B cell (primary cell): ENCODE measurements at regions of chr1 and their contacts with region 1.

Region 1: DNA sequence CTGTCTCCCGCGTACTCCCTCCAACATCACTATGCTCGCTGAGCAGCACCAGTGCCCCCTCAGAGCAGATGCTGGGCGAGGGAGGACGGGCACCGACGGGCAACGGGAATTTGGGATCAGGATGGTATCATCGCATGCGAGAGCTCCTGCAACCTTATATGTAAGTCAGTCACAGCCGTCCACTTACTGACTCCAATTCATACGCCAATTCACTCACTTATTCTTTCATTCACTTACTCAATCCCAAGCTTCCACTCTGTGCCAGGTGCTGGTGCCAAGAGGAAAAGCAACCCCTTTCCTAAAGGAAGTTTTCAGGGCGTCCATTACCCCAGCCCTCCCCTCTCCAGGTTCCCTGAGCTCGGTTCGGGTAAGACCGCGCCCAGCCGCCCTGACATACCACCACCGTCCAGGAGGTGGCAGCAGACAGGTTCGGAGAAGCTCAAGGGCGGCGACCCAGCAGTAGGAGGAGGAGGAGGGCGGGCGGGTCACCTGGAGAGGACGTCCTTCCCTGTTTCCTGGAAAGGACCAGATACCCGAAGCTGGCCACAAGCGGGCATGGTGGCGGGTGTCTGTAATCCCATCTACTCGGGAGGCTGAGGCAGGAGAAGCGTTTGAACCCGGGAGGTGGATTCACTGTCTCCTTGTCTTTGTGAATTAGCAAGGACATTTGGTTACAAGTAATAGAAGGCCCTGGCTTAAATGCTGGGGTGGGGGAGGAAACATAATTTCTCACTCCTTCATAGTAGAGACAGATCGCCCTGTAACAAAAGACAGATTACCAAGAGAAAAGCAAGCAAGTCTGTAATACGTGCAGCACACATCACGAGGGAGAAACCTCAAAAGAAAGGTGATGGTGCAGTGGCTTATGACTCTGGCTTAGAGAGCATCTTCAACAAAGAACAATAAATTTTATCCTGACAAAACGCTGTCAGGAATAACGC is 7.6 kb upstream of the IL22RA1 start:
- DNase-seq: peak; percentile 90
- ATAC-seq: peak; percentile 98
- H3K4me3 ChIP-seq: peak overlapping the region in 4 of 5 experiments; percentile 32 to 50 (median 48)
- H3K4me3 Mint-ChIP-seq: peak overlapping the region; percentile 82
- H3K27ac ChIP-seq: no peak overlapping the region
- H3K27ac Mint-ChIP-seq: peak overlapping the region; percentile 21
- H3K4me1 ChIP-seq: peaks cover 13 to 19% of the 10 kb centered on the region in 2 donors
- H3K4me1 Mint-ChIP-seq: peaks cover 27% of the 10 kb centered on the region
- H3K27me3 ChIP-seq: peaks cover 0 to 7% (median 2%) of the 10 kb centered on the region in 4 experiments
- H3K27me3 Mint-ChIP-seq: peaks cover 3% of the 10 kb centered on the region
- CTCF ChIP-seq: peak; percentile 88

Region 2: DNA sequence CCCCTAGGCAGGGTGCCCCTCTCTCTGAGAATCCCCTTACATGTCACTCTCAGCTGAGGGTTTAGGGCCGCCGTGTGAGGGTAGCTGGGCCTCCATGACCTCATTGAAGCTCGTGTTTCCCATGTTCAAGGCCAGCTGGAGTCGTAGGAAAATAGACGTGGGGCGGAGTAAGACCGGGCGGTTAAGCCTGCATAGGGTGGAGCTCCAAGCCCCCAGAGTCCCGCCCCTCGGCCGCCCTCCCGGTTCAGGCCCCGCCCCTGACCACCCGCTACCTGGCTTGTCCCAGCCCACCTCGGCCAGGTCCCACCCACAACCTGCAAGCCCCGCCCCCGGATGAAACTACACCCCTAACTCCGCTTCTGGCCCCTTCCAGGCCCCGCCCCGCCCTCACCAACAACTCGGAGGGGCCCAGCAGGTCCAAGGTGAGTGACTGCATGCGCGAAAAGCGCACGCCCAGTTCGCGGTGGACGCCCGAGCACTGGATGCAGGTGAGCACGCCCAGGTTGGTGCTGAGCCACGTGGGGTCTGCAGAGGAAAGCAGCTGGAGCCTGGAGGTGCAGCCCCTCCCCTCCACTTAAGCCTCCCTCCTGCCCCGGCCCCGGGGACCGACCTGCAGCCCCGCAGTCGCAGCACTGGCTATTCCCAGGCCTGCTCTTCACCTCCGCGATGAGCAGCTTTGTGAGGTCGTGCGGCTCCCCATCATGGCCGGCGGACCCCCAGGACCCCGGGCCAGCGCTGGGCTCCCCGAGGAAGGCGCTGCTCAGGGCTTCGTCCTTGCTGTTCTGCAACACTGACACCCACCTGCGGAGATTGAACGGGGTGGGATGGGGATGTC is 713.8 kb before region 1 on chr1:
- CTCF ChIA-PET with region 1: no interaction called
- POLR2A ChIA-PET with region 1: no interaction called
- intact Hi-C with region 1: no loop called
- DNase-seq: peak; percentile 36
- ATAC-seq: peak; percentile 49
- H3K4me3 ChIP-seq: no peak overlapping the region
- H3K4me3 Mint-ChIP-seq: no peak overlapping the region
- H3K27ac ChIP-seq: no peak overlapping the region
- H3K27ac Mint-ChIP-seq: no peak overlapping the region
- H3K4me1 ChIP-seq: no peaks in the 10 kb centered on the region
- H3K4me1 Mint-ChIP-seq: no peaks in the 10 kb centered on the region
- H3K27me3 ChIP-seq: peaks cover 0 to 2% (median 0%) of the 10 kb centered on the region in 4 experiments
- H3K27me3 Mint-ChIP-seq: peaks cover 9% of the 10 kb centered on the region
- CTCF ChIP-seq: no peak

Region 3: GRCh38 chr1:23825076-23825761 is 325.3 kb before region 1 on chr1 and contains the start of gene HMGCL:
- CTCF ChIA-PET with region 1: no interaction called
- POLR2A ChIA-PET with region 1: no interaction called
- intact Hi-C with region 1: no loop called
- DNase-seq: peak; percentile 92
- ATAC-seq: peak; percentile 98
- H3K4me3 ChIP-seq: peak within 1 kb of the TSS; percentile 76 to 95 (median 93)
- H3K4me3 Mint-ChIP-seq: peak within 1 kb of the TSS; percentile 96
- H3K27ac ChIP-seq: peak within 1 kb of the TSS; percentile 81 to 97
- H3K27ac Mint-ChIP-seq: peak within 1 kb of the TSS; percentile 98
- H3K4me1 ChIP-seq: peaks cover 10 to 14% of the 10 kb centered on the region in 2 donors
- H3K4me1 Mint-ChIP-seq: peaks cover 22% of the 10 kb centered on the region
- H3K27me3 ChIP-seq: no peaks in the 10 kb centered on the region
- H3K27me3 Mint-ChIP-seq: no peaks in the 10 kb centered on the region
- CTCF ChIP-seq: no peak
- total RNA-seq, gene HMGCL: 35.9 and 41.2 TPM in 2 replicates

Region 4: DNA sequence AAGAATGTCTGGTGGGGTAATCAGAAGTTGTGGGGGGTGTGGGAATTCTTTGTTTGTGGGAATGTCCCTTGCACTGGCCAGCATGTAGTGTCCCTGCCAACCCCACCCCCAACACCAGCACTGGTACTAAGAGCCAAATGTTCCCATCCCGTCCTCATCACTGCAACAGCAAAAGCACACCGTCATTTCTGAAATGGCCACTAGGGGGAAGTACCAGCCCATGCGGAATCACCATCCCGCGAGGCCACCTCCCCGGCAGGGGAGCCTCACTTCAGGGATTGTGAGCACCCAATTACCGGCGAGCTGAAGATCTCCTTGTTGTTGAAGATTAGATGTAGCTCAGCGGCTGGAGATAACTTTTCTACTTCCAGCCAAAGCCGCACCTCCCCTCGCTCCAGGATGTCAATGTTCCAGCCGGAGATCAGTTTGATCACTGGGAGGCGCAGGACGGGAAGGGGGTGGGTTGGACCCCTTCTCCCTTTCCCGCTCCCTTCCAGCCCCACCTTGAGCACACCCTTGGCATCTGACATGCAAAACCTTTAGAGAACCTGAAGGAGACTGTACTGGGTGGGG is 79.6 kb before region 1 on chr1:
- CTCF ChIA-PET with region 1: interaction called, 10 read pairs
- POLR2A ChIA-PET with region 1: no interaction called
- intact Hi-C with region 1: loop called (anchors 2 kb)
- DNase-seq: peak; percentile 82
- ATAC-seq: peak; percentile 88
- H3K4me3 ChIP-seq: no peak overlapping the region
- H3K4me3 Mint-ChIP-seq: no peak overlapping the region
- H3K27ac ChIP-seq: no peak overlapping the region
- H3K27ac Mint-ChIP-seq: no peak overlapping the region
- H3K4me1 ChIP-seq: peaks cover 0 to 3% of the 10 kb centered on the region in 2 donors
- H3K4me1 Mint-ChIP-seq: peaks cover 4% of the 10 kb centered on the region
- H3K27me3 ChIP-seq: peaks cover 0 to 4% (median 1%) of the 10 kb centered on the region in 4 experiments
- H3K27me3 Mint-ChIP-seq: peaks cover 8% of the 10 kb centered on the region
- CTCF ChIP-seq: peak; percentile 93

Region 5: DNA sequence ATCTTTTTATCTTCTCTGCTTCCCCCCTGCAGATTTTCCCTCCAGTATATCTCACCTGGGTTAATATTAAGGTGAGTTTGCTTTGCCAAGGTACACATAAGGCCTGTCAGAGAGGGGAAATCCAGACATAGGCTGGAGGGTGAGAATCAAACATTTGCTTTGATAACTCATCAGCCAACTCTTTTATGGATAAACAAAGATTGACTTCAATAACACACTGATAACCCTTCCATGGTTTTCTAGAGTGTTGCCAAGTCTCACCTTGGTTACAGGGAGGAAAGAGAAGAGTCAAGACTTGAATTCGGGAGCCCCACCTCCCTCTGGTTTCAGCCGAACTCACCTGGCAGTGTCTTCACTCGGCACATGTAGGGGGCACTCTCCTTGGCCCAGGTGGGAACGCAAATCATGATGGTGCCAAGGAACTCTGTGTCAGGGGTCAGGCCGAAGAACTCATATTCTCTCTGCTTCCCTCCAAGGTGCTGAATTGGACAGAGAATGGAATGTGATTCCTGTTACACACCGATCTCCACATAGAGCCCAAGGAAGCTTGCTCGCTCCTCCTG is 22.6 kb before region 1 on chr1:
- CTCF ChIA-PET with region 1: no interaction called
- POLR2A ChIA-PET with region 1: no interaction called
- intact Hi-C with region 1: no loop called
- DNase-seq: no peak
- ATAC-seq: no peak
- H3K4me3 ChIP-seq: no peak overlapping the region
- H3K4me3 Mint-ChIP-seq: no peak overlapping the region
- H3K27ac ChIP-seq: no peak overlapping the region
- H3K27ac Mint-ChIP-seq: no peak overlapping the region
- H3K4me1 ChIP-seq: no peaks in the 10 kb centered on the region
- H3K4me1 Mint-ChIP-seq: no peaks in the 10 kb centered on the region
- H3K27me3 ChIP-seq: no peaks in the 10 kb centered on the region
- H3K27me3 Mint-ChIP-seq: peaks cover 21% of the 10 kb centered on the region
- CTCF ChIP-seq: no peak

Region 6: DNA sequence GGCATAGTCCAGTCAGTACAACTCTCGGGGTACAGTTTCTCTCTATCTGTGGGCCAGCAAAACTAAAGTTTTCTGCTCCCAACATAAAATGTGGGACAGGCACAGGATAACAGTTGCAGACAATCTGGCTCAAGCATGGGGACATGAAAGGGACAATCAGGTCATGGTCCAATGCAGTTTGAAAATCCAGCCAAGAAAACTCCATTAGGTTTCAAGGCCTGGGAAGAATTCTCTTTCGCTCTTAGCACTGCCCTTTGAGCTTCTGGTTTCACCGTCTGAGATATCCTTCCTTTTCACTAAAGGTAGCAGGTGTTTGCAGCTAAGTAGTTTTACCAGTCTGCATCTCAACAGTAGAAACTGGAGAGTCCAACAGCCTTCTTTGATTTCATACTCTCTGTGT is 13.5 kb after region 1 on chr1:
- CTCF ChIA-PET with region 1: interaction called, 15 read pairs
- POLR2A ChIA-PET with region 1: no interaction called
- intact Hi-C with region 1: no loop called
- DNase-seq: no peak
- ATAC-seq: no peak
- H3K4me3 ChIP-seq: no peak overlapping the region
- H3K4me3 Mint-ChIP-seq: no peak overlapping the region
- H3K27ac ChIP-seq: no peak overlapping the region
- H3K27ac Mint-ChIP-seq: no peak overlapping the region
- H3K4me1 ChIP-seq: no peaks in the 10 kb centered on the region
- H3K4me1 Mint-ChIP-seq: peaks cover 6% of the 10 kb centered on the region
- H3K27me3 ChIP-seq: no peaks in the 10 kb centered on the region
- H3K27me3 Mint-ChIP-seq: no peaks in the 10 kb centered on the region
- CTCF ChIP-seq: no peak

Region 7: DNA sequence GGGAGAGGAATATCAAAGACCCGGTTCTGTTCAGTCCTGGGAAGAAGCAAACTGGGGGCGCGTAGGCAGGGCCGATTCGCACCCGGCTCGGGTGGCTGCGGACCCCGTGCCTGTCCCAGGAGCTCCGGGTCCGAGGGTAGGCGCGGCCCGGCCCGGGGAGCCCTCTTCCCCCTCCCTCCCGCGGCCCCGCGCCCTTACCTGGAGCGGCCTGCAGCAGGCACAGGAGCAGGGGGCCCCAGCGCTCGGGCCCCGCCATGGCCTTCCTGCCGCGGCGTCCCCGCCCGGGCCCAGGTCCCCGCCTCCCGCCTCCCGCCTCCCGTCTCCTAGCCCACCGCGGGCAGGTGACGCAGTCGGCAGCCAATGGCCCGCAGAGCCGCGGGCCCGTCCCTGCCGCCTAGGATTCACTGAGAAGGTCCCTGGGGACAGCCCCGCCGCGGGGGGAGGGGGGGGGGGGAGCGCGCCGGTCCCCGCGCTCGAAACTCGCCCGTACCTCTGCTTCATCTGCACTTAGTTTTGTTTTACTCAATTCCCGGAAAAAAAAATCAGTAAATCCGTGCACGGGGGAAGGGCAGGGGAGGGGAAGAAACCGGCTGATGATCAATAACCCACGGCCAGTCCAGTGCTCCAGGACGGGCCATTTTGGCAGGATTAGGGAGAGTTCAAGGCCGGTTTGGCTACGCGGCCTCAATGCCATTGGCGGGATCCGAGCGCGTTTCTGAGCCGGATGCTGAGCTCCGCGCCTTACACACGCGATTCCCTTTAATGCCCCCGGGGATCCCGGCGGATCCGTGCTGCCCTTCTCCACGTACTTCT is 36.7 kb after region 1 on chr1 and contains the start of gene IFNLR1:
- CTCF ChIA-PET with region 1: interaction called, 115 read pairs
- POLR2A ChIA-PET with region 1: interaction called, 5 read pairs
- intact Hi-C with region 1: loop called (anchors 2 kb)
- DNase-seq: peak; percentile 87
- ATAC-seq: peak; percentile 57
- H3K4me3 ChIP-seq: peak within 1 kb of the TSS; percentile 65 to 85 (median 77)
- H3K4me3 Mint-ChIP-seq: peak within 1 kb of the TSS; percentile 95
- H3K27ac ChIP-seq: peak within 1 kb of the TSS; percentile 82
- H3K27ac Mint-ChIP-seq: peak within 1 kb of the TSS; percentile 93
- H3K4me1 ChIP-seq: peaks cover 69 to 78% of the 10 kb centered on the region in 2 donors
- H3K4me1 Mint-ChIP-seq: peaks cover 83% of the 10 kb centered on the region
- H3K27me3 ChIP-seq: no peaks in the 10 kb centered on the region
- H3K27me3 Mint-ChIP-seq: no peaks in the 10 kb centered on the region
- CTCF ChIP-seq: no peak
- total RNA-seq, gene IFNLR1: 38.0 and 39.7 TPM in 2 replicates

Region 8: DNA sequence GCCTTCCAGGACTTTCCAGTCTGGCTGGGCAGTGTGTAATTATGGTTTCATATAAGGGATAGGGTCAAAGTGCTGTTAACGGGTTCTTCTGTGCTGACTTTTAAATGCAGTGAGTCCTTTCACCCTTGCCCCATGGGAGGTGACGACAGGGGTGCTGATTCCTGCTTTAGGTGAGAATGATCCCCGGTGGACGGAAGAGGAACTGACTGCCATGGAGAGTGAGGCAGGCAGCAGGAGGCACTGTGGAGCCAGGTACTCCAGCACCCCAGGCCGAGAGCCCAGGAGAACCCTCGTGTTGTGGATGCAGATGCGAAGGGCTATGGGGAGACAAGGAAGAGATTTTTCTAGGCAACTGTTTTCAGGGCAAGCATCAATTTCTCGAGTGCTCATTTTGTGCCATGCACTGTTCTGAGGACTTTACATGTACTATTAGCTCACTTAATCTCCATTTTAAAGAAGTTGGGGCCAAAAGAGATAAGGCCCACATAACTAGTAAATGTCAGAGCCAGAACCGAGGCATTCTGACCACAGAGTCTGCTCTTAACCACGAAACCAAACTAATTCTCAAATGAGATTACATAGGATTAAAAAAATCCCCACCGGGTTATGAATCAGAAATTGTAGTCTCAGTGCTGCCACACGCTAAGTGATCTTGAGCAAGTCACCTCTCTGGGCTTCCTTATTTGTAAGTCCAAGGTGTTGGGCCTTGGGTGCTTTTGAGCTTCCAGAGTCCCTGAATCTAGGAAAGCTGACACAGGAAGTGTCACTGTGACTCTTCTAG is 234.8 kb after region 1 on chr1:
- CTCF ChIA-PET with region 1: interaction called, 387 read pairs
- POLR2A ChIA-PET with region 1: no interaction called
- intact Hi-C with region 1: no loop called
- DNase-seq: no peak
- ATAC-seq: no peak
- H3K4me3 ChIP-seq: no peak overlapping the region
- H3K4me3 Mint-ChIP-seq: peak overlapping the region; percentile 14
- H3K27ac ChIP-seq: no peak overlapping the region
- H3K27ac Mint-ChIP-seq: peak overlapping the region; percentile 41
- H3K4me1 ChIP-seq: peaks cover 12 to 29% of the 10 kb centered on the region in 2 donors
- H3K4me1 Mint-ChIP-seq: peaks cover 28% of the 10 kb centered on the region
- H3K27me3 ChIP-seq: no peaks in the 10 kb centered on the region
- H3K27me3 Mint-ChIP-seq: no peaks in the 10 kb centered on the region
- CTCF ChIP-seq: peak; percentile 43

Region 9: GRCh38 chr1:25037174-25038074 is 886.9 kb after region 1 on chr1:
- CTCF ChIA-PET with region 1: no interaction called
- POLR2A ChIA-PET with region 1: no interaction called
- intact Hi-C with region 1: no loop called
- DNase-seq: peak; percentile 74
- ATAC-seq: peak; percentile 65
- H3K4me3 ChIP-seq: no peak overlapping the region
- H3K4me3 Mint-ChIP-seq: peak overlapping the region; percentile 0
- H3K27ac ChIP-seq: no peak overlapping the region
- H3K27ac Mint-ChIP-seq: peak overlapping the region; percentile 63
- H3K4me1 ChIP-seq: peaks cover 36 to 49% of the 10 kb centered on the region in 2 donors
- H3K4me1 Mint-ChIP-seq: peaks cover 34% of the 10 kb centered on the region
- H3K27me3 ChIP-seq: peaks cover 0 to under 1% (median 0%) of the 10 kb centered on the region in 4 experiments
- H3K27me3 Mint-ChIP-seq: peaks cover 5% of the 10 kb centered on the region
- CTCF ChIP-seq: peak; percentile 71